Activated B cell treated with CpG ODN at 0.5 μM for 24 hours (primary cell): ENCODE measurements at regions of chr9 and their contacts with region 1.

Region 1: DNA sequence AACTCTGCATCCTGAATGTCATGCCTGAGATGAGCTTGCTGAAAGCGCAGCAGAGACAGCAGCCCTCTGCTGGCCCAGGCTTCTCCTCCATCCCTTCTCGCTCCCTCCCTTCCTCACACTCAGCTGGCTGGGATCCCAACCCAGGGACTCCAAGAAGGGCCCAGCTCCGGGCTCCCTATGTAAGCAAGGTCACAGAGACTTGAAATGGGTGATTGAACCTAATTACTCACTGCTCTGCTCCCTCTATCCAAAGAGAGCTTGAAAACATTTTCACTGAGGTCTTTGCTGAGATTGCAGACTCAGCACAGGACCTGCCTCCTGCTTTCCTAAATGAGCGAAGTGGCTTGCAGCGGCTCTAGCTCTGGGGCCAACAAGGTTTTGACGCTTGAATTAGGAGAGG is 42.8 kb downstream of the RAPGEF1 start:
- DNase-seq: no peak
- ATAC-seq: no peak
- H3K4me3 Mint-ChIP-seq: no peak overlapping the region
- H3K27ac Mint-ChIP-seq: no peak overlapping the region
- H3K4me1 Mint-ChIP-seq: peaks cover 97% of the 10 kb centered on the region
- H3K27me3 Mint-ChIP-seq: no peaks in the 10 kb centered on the region
- CTCF ChIP-seq: no peak

Region 2: DNA sequence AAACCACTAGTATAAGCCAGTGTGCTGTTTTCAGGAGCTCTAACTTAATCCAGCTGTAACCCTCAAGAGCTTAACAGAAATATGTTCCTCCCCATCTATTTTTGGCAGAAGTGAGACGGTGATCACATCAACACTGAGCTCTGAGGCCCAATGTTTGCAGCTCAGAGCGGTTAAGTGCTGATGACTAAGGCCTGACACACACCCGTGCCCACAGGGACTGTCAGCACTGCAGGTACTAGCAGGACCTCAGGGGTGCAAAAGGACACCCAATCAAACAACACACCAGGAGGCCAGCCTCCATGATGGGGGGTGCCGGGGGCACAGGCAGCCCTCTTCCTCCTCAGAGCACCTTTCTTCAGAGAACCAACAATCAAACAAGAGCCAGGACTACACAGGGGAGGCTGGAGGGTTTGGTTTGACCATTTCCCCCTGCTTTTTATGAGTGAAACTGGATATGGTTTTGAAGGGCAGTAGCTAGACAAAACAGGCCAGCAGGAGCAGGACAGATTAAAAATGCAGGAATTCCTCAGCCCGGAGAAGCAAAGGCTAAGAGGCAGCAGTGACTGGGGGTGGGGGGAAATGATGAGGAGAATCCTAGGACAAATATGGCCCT is 18.5 kb before region 1 on chr9:
- CTCF ChIA-PET with region 1: interaction called, 5 read pairs
- POLR2A ChIA-PET with region 1: interaction called, 13 read pairs
- intact Hi-C with region 1: loop called (anchors 2 kb)
- DNase-seq: peak; percentile 63
- ATAC-seq: peak; percentile 90
- H3K4me3 Mint-ChIP-seq: peak overlapping the region; percentile 93
- H3K27ac Mint-ChIP-seq: peak overlapping the region; percentile 93
- H3K4me1 Mint-ChIP-seq: peaks cover 98% of the 10 kb centered on the region
- H3K27me3 Mint-ChIP-seq: no peaks in the 10 kb centered on the region
- CTCF ChIP-seq: no peak

Region 3: GRCh38 chr9:131685753-131686706 is 11.1 kb before region 1 on chr9:
- CTCF ChIA-PET with region 1: no interaction called
- POLR2A ChIA-PET with region 1: interaction called, 16 read pairs
- intact Hi-C with region 1: no loop called
- DNase-seq: no peak
- ATAC-seq: peak; percentile 91
- H3K4me3 Mint-ChIP-seq: peak overlapping the region; percentile 65
- H3K27ac Mint-ChIP-seq: peak overlapping the region; percentile 71
- H3K4me1 Mint-ChIP-seq: peaks cover 92% of the 10 kb centered on the region
- H3K27me3 Mint-ChIP-seq: no peaks in the 10 kb centered on the region
- CTCF ChIP-seq: no peak